HepG2 (cell line): ENCODE measurements at regions of chr21 and their contacts with region 1.

Region 1: GRCh38 chr21:46635324-46636172 is at the start of gene PRMT2:
- DNase-seq: peak; percentile 93
- ATAC-seq: peak; percentile 94
- H3K4me3 ChIP-seq: peak within 1 kb of the TSS; percentile 80 to 93 (median 83)
- H3K27ac ChIP-seq: peak within 1 kb of the TSS; percentile 85
- H3K4me1 ChIP-seq: peaks cover 54% of the 10 kb centered on the region
- H3K27me3 ChIP-seq: no peaks in the 10 kb centered on the region; a peak in 1 of 5 replicates
- CTCF ChIP-seq: peak; percentile 24; the same call in 1 of the 2 replicates
- EP300 ChIP-seq: no peak
- POLR2A ChIP-seq: peak; percentile 88 to 96
- RAD21 ChIP-seq: no peak; the same call in none of the 2 replicates
- total RNA-seq, gene PRMT2: 54.4 and 63.3 TPM in 2 replicates

Region 2: GRCh38 chr21:46458315-46459023 is 177.1 kb before region 1 on chr21 and contains the start of gene DIP2A:
- CTCF ChIA-PET with region 1: no interaction called
- POLR2A ChIA-PET with region 1: interaction called, 14 read pairs
- in situ Hi-C with region 1: no loop called
- intact Hi-C with region 1: no loop called
- DNase-seq: peak; percentile 95
- ATAC-seq: peak; percentile 98
- H3K4me3 ChIP-seq: peak within 1 kb of the TSS; percentile 85 to 98 (median 89)
- H3K27ac ChIP-seq: peak within 1 kb of the TSS; percentile 94
- H3K4me1 ChIP-seq: peaks cover 51% of the 10 kb centered on the region
- H3K27me3 ChIP-seq: no peaks in the 10 kb centered on the region; a peak in 1 of 5 replicates
- CTCF ChIP-seq: peak; percentile 57
- EP300 ChIP-seq: peak; percentile 4 to 80; a peak in 2 of 4 replicates
- POLR2A ChIP-seq: peak; percentile 85
- RAD21 ChIP-seq: peak; percentile 29; the same call in 1 of the 2 replicates
- total RNA-seq, gene DIP2A: 14.3 and 18.5 TPM in 2 replicates

Region 3: DNA sequence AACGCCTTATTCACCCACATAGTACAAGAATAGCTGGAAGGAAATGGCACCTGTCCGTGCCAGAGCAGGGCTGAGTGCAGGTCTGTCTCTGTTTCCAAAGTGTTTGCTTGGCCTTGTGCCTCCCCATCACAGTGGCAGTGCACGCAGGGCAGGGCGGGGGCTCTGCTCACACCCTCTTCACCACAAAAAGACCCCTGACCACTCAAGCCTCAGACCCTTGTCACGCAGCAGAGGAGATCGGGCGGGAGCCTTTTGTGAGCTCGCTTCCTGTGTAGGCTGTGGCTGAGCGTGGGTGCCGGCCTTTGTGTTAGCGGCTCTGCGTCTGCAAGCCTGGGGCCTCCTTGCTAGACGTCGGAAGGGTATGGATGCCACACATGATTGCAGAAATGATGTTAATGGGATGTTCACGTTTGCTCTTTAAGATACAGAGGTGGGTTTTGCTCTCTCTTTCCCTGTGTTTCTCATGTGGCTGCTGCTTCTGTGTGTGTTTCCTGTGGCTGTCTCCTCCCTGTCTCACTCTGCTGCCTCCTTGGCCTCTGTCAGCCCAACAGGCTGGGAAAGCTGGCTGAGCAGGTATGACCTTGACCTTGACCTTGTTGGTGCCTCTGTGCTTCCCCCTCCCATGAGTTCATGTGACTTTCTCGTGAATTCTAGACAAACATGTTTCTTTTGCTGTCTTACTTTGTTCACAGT is 76.1 kb before region 1 on chr21:
- CTCF ChIA-PET with region 1: no interaction called
- POLR2A ChIA-PET with region 1: interaction called, 11 read pairs
- in situ Hi-C with region 1: no loop called
- intact Hi-C with region 1: no loop called
- DNase-seq: peak; percentile 41
- ATAC-seq: peak; percentile 25; the same call in 2 of the 3 replicates
- H3K4me3 ChIP-seq: no peak overlapping the region
- H3K27ac ChIP-seq: no peak overlapping the region
- H3K4me1 ChIP-seq: peaks cover 17% of the 10 kb centered on the region
- H3K27me3 ChIP-seq: no peaks in the 10 kb centered on the region
- CTCF ChIP-seq: no peak
- EP300 ChIP-seq: peak in 1 of 2 experiments; percentile 33; a peak in 1 of 4 replicates
- POLR2A ChIP-seq: no peak; a peak in 1 of 4 replicates
- RAD21 ChIP-seq: no peak

Region 4: GRCh38 chr21:46581780-46582307 is 53.7 kb before region 1 on chr21:
- CTCF ChIA-PET with region 1: no interaction called
- POLR2A ChIA-PET with region 1: interaction called, 19 read pairs
- in situ Hi-C with region 1: no loop called
- intact Hi-C with region 1: no loop called
- DNase-seq: peak; percentile 79
- ATAC-seq: peak; percentile 97
- H3K4me3 ChIP-seq: peak overlapping the region in 1 of 3 experiments; percentile 43; a peak in 1 of 6 replicates
- H3K27ac ChIP-seq: peak overlapping the region; percentile 74
- H3K4me1 ChIP-seq: peaks cover 22% of the 10 kb centered on the region
- H3K27me3 ChIP-seq: no peaks in the 10 kb centered on the region
- CTCF ChIP-seq: no peak
- EP300 ChIP-seq: no peak
- POLR2A ChIP-seq: no peak
- RAD21 ChIP-seq: peak; percentile 27; the same call in 1 of the 2 replicates

Region 5: DNA sequence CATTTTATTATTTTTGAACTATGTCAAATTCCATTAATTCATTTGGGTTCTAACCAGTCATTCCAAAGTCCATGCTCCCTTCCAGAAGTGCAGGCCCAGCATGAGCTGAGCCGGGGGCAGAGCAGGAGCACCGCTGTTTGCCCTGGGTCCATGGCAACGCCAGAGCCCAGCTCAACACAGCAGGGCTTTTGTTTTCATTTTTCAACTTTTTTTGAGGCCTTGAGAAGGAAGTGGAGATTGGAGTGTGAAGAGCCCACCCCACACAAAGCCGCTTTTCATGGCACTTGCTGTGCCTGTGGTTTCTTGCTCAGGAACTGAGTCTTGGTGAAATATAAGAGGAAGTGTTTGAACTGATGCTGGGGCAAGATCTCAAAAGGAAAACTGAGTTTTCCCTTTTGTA is 13.3 kb before region 1 on chr21:
- CTCF ChIA-PET with region 1: no interaction called
- POLR2A ChIA-PET with region 1: interaction called, 48 read pairs
- in situ Hi-C with region 1: no loop called
- intact Hi-C with region 1: loop called (anchors 2 kb)
- DNase-seq: peak; percentile 94
- ATAC-seq: peak; percentile 97
- H3K4me3 ChIP-seq: peak overlapping the region in 1 of 3 experiments; percentile 54; a peak in 1 of 6 replicates
- H3K27ac ChIP-seq: peak overlapping the region; percentile 97
- H3K4me1 ChIP-seq: peaks cover 47% of the 10 kb centered on the region
- H3K27me3 ChIP-seq: no peaks in the 10 kb centered on the region
- CTCF ChIP-seq: no peak
- EP300 ChIP-seq: peak; percentile 63 to 67; a peak in 3 of 4 replicates
- POLR2A ChIP-seq: peak in 1 of 2 experiments; percentile 40; a peak in 1 of 4 replicates
- RAD21 ChIP-seq: no peak